HEK293 (cell line): ENCODE measurements at regions of chr18 and their contacts with region 1.

Region 1: DNA sequence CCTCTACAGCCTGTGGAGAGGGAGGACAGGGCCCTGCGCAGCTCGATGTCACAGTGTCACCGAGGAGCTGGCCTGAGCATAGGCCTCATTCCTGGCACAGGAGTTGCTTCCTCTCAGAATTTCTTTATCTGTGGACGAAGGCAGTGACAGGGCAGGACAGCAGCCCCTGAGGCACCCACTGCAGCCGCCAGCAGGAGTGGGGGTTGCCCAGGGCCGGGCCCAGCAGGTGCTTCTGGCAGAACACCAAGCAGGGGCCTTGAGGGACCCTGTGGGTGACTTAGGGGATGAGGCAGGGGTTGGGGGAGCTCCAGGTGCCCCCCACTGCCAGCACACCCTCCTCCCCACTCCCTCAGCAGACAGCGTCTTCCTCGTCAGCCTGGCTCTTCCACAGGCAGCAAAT is 290.0 kb downstream of the PHLPP1 start:
- H3K4me3 ChIP-seq: no peak overlapping the region
- H3K27ac ChIP-seq: no peak overlapping the region
- H3K4me1 ChIP-seq: no peaks in the 10 kb centered on the region
- CTCF ChIP-seq: no peak

Region 2: DNA sequence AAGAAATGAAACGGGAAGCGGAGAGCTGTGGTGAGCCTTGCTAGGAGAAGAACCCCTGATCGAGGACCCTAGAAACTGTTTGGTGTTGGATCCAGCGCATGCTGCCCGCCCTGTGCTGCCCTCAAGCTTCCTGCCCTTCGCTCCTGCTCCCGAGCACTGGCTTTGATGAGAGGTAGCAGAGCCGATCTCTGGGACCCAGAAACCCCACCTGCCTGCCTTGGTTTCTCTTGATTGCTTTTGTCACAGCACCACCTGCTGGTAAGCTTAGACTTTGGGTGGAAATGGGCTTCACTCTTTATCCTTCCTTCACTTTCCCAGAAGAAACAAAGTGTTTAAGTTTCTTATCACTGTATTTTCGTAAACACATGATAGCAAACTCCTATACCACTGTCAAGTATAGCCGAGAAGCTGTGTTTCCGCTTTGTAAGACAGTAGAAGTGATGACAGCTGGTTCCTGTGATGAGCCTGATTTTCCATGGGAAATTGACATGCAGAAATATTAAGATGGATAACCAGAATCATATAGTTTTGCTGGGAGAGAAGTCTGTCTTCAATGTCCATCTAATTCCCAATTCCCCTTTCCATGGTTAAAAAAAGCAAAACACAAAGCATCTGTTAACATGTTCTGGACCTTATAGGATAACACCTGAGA is 22.6 kb before region 1 on chr18:
- CTCF ChIA-PET with region 1: interaction called, 3 read pairs
- POLR2A ChIA-PET with region 1: interaction called, 10 read pairs
- H3K4me3 ChIP-seq: no peak overlapping the region
- H3K27ac ChIP-seq: no peak overlapping the region
- H3K4me1 ChIP-seq: no peaks in the 10 kb centered on the region
- CTCF ChIP-seq: peak; percentile 54; the same call in 1 of the 2 replicates